OCI-LY7 (cell line): ENCODE measurements at regions of chr13 and their contacts with region 1.

Region 1: GRCh38 chr13:48037346-48038173 is at the start of gene NUDT15:
- DNase-seq: peak; percentile 98
- H3K4me3 ChIP-seq: peak within 1 kb of the TSS; percentile 78
- H3K27ac ChIP-seq: peak within 1 kb of the TSS; percentile 89
- H3K4me1 ChIP-seq: peaks cover 27% of the 10 kb centered on the region
- CTCF ChIP-seq: peak; percentile 97
- total RNA-seq, gene NUDT15: 19.3 and 26.8 TPM in 2 replicates

Region 2: GRCh38 chr13:47858042-47859025 is 179.2 kb before region 1 on chr13:
- CTCF ChIA-PET with region 1: no interaction called
- POLR2A ChIA-PET with region 1: no interaction called
- intact Hi-C with region 1: no loop called
- DNase-seq: no peak
- H3K4me3 ChIP-seq: no peak overlapping the region
- H3K27ac ChIP-seq: no peak overlapping the region
- H3K4me1 ChIP-seq: no peaks in the 10 kb centered on the region
- CTCF ChIP-seq: no peak

Region 3: DNA sequence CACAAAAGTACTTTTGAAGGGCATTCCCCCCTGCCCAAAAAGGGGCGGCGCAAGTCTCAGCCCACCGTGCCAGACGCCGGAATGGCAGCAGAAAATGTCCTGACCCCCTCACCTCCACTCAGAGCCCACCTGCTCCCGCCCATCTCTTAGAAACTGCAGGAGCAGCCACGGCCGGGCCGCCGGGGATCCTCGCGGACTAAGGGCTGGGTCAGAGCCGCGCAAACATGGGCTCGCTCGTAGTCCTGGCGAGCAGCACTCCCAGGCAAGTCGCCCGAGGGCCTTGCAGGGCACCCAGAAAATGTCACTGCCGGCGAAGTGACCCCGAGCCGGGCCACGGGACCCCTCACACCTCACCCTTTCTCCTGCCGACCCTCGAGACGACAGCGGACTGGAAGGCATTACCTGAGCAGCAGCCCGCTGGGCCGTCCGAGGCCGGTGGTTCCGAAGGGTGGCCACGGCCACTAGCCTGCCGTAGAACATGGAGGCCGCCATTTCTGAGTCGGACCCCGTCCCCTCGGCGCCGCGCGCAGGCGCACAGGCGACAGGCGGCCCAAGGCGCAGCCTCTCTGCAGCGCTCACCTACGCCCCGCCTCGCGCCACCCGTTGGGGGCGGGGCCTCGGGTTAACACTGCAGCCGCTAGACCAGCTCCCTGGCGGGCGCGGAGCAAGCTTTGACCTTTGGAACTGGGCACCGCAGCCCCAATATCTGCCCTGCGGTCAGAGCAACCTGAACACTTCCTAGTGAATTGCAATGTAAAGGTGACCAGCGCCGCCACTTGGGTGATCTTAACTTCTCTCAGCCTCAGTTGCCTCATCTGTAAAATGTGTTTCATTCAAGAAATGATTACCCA is 36.6 kb before region 1 on chr13 and contains the start of gene SUCLA2:
- CTCF ChIA-PET with region 1: interaction called, 3 read pairs
- POLR2A ChIA-PET with region 1: interaction called, 4 read pairs
- intact Hi-C with region 1: loop called (anchors 2 kb)
- DNase-seq: peak; percentile 94
- H3K4me3 ChIP-seq: peak within 1 kb of the TSS; percentile 99
- H3K27ac ChIP-seq: no peak within 1 kb of the TSS
- H3K4me1 ChIP-seq: peaks cover 22% of the 10 kb centered on the region
- CTCF ChIP-seq: no peak
- total RNA-seq, gene SUCLA2: 19.9 and 22.9 TPM in 2 replicates

Region 4: GRCh38 chr13:48009298-48009697 is 28.3 kb before region 1 on chr13:
- CTCF ChIA-PET with region 1: interaction called, 3 read pairs
- POLR2A ChIA-PET with region 1: interaction called, 4 read pairs
- intact Hi-C with region 1: loop called (anchors 1 kb)
- DNase-seq: no peak
- H3K4me3 ChIP-seq: no peak overlapping the region
- H3K27ac ChIP-seq: no peak overlapping the region
- H3K4me1 ChIP-seq: no peaks in the 10 kb centered on the region
- CTCF ChIP-seq: no peak

Region 5: GRCh38 chr13:48094781-48095502 is 57.4 kb after region 1 on chr13 and contains the start of gene MED4:
- CTCF ChIA-PET with region 1: interaction called, 3 read pairs
- POLR2A ChIA-PET with region 1: interaction called, 3 read pairs
- intact Hi-C with region 1: loop called (anchors 5 kb)
- DNase-seq: peak; percentile 96
- H3K4me3 ChIP-seq: peak within 1 kb of the TSS; percentile 99
- H3K27ac ChIP-seq: peak within 1 kb of the TSS; percentile 39
- H3K4me1 ChIP-seq: peaks cover 21% of the 10 kb centered on the region
- CTCF ChIP-seq: peak; percentile 95
- total RNA-seq, gene MED4: 25.2 and 31.1 TPM in 2 replicates